Activated CD8-positive, alpha-beta memory T cell treated with anti-CD3 and anti-CD28 coated beads, Interleukin-2, amount 10 ng/mL, durations not matched to agents 7 days and 5 days (primary cell): ENCODE measurements at regions of chr12 and their contacts with region 1.

Region 1: DNA sequence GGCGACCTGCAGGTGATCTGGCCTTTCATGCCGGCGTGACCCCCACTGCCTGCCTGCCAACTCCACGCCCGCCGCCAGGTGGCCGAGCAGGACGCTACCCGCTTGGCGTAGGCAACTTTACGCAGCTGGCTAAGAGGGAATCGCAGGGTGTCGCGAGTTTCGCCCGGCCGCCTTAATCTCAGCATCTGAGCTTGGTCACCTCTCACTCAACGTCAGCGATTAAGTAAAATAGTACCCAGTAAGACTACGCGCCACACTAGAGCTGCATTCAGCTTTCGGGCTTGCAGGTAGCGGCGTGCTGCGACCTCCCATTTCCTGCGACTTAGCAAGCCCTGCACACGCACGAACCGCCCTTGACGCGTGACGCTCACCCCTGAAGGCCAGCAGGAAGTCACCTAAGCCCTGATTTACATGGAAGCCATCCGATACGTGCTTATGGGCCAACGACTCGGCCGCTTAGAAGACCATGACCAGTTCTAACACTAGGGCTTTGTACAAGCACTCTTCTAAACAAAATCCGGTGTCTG is 33.2 kb downstream of the WBP11 start:
- DNase-seq: peak; percentile 92
- ATAC-seq: peak; percentile 34
- H3K4me3 Mint-ChIP-seq: peak overlapping the region; percentile 92
- H3K27ac Mint-ChIP-seq: peak overlapping the region; percentile 99
- H3K4me1 Mint-ChIP-seq: peaks cover 45% of the 10 kb centered on the region
- H3K27me3 Mint-ChIP-seq: no peaks in the 10 kb centered on the region

Region 2: DNA sequence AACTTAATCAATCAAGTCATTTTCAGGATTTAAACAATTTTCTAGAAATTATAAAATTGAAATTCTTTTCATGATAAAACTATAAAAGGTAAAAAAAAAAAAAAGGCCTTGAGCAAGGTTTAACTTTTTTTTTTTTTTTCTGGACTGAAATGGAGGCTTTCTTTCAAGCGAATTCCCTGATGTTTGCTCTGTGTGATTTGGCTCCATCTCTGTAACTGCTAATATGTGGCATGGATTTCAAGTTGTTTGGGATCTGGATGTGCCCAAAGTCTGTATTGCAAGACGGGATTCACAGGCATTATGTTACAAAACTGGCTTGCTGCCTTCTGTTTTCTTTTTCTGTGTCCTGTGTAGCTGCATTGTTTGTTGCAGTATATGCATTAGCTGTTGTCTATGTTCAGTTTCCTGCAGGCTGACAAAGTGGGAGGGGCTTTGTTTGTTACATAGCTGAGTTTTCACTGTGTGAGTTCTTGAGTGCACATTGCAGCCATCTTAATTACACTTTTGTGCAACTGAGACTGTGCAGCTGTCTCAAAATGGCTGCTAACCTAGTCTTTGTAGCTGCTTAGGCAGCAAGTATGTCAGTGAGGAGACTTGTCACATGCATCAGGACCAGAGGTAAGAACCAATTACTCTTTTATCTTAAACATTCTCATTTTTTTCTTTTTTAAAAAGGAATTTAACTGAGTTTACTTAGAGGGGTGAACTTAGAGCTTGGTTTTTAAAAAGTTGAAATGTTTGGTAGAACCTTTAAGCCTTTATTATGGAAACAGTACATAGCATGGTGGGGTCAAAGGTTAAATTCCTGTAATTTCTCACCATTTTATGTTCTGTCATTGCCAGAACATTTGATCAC is 385.0 kb before region 1 on chr12:
- CTCF ChIA-PET with region 1: no interaction called
- DNase-seq: peak; percentile 90
- ATAC-seq: peak; percentile 96
- H3K4me3 Mint-ChIP-seq: peak overlapping the region; percentile 79
- H3K27ac Mint-ChIP-seq: peak overlapping the region; percentile 98
- H3K4me1 Mint-ChIP-seq: peaks cover 56% of the 10 kb centered on the region
- H3K27me3 Mint-ChIP-seq: no peaks in the 10 kb centered on the region

Region 3: DNA sequence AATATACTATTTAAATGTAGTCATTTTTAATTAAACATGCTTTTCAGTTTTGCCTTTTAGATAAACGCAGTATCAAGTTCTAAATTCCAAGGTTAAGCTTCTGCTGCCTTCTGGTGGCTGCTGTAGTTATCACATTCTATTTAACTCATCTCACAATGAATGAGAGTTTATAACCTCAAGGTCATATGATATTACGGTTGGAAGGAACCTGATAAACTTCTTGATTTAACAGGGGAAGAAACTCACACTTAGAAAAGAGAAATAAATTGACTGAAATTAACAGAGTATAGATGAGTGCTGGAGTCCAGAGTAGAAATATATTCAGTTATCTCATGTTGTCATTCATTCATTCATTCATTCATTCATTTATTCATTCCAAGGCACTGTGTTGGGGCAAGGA is 105.5 kb before region 1 on chr12:
- CTCF ChIA-PET with region 1: no interaction called
- DNase-seq: no peak
- ATAC-seq: peak; percentile 51
- H3K4me3 Mint-ChIP-seq: no peak overlapping the region
- H3K27ac Mint-ChIP-seq: no peak overlapping the region
- H3K4me1 Mint-ChIP-seq: peaks cover 11% of the 10 kb centered on the region
- H3K27me3 Mint-ChIP-seq: peaks cover 7% of the 10 kb centered on the region

Region 4: DNA sequence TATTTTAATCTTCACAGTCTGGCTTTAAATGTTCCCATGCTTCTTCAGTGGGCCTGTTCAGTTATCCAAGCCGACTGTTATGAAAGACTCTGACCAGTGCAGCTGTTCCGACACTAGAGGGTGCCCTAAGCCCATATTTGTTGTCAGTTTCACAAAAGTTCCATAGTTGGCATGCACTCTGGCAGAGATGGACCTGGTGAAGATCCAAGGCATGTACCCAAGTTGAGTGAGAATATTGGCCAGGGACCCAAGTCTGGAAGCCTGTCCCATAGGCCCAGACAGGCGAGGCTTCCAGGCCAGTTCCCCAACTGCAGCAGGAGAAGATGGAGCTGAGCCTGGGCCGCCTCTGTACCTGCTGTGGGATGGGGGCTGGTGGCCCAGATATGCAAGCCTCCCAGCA is 46.3 kb before region 1 on chr12:
- CTCF ChIA-PET with region 1: interaction called, 13 read pairs
- DNase-seq: peak; percentile 65
- ATAC-seq: peak; percentile 64
- H3K4me3 Mint-ChIP-seq: no peak overlapping the region
- H3K27ac Mint-ChIP-seq: no peak overlapping the region
- H3K4me1 Mint-ChIP-seq: peaks cover 3% of the 10 kb centered on the region
- H3K27me3 Mint-ChIP-seq: peaks cover 16% of the 10 kb centered on the region

Region 5: GRCh38 chr12:14803011-14803829 is 33.2 kb after region 1 on chr12 and contains the starts of genes C12orf60 and WBP11:
- CTCF ChIA-PET with region 1: interaction called, 81 read pairs
- DNase-seq: peak; percentile 95
- ATAC-seq: peak; percentile 98
- H3K4me3 Mint-ChIP-seq: no peak within 1 kb of the TSS
- H3K27ac Mint-ChIP-seq: no peak within 1 kb of the TSS
- H3K4me1 Mint-ChIP-seq: peaks cover 20% of the 10 kb centered on the region
- H3K27me3 Mint-ChIP-seq: no peaks in the 10 kb centered on the region
- total RNA-seq, gene C12orf60: 1.6 to 1.9 TPM
- total RNA-seq, gene WBP11: 102 to 116 TPM

Region 6: DNA sequence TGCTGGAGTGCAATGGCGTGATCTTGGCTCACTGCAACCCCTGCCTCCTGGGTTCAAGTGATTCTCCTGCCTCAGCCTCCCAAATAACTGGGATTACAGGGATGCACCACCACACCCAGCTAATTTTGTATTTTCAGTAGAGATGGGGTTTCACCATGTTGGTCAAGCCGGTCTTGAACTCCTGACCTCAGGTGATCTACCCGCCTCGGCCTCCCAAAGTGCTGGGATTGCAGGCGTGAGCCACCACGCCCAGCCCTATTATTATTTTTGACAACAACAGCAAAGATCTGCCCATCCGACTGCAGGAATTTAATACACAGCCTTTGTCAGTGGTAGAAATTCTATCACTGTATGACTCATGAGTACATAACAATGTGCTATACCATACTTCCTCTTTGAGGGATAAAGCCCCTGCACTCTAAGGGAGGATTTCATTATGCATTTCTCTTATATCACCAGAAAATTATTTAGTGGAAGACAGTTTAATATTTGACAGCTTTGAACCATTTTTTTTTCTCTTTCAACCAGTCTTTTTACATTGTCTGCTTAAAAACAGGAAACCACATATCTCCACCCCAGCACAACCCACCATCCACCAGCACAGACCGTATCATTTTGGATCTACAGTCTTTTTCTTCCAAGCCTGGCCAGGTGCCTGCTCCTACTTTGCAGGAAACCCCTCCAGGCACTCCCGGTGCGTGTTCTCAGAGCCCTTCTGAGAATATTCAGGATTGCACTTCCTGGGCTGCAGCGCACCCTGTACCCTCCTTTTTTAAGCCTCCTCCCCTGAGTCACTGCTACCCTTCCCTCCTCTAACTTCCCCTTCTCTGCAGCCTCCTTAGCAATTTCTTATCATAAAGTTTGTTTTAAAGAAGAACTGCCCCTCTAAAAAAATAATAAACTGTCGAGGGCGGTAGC is 190.8 kb after region 1 on chr12:
- CTCF ChIA-PET with region 1: interaction called, 11 read pairs
- DNase-seq: peak; percentile 64
- ATAC-seq: peak; percentile 49
- H3K4me3 Mint-ChIP-seq: peak overlapping the region; percentile 99
- H3K27ac Mint-ChIP-seq: peak overlapping the region; percentile 100
- H3K4me1 Mint-ChIP-seq: peaks cover 52% of the 10 kb centered on the region
- H3K27me3 Mint-ChIP-seq: no peaks in the 10 kb centered on the region